Activated B cell treated with CpG ODN at 0.5 μM for 24 hours (primary cell): ENCODE measurements at regions of chr7 and their contacts with region 1.

Region 1: DNA sequence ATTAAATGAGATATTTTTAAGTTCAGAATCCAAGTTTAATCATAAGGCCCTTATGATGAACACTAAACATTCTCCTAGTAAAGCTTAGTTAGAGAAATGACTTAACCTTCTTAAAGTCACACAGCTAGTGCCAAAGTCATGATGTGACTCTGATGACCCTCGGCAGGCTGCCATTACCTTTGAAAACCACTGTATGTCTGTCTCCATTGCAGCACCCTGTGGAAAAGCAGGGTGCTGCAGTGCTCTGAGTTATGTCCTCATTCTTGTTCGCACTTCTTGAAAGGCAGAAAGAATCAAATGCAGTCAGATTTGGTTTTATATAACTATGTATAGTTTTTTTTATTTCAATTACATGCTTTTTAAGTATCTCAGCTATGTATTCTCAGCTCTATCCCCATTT is 105.0 kb downstream of the PHTF2 start:
- DNase-seq: no peak
- ATAC-seq: peak; percentile 37
- H3K4me3 Mint-ChIP-seq: no peak overlapping the region
- H3K27ac Mint-ChIP-seq: peak overlapping the region; percentile 96
- H3K4me1 Mint-ChIP-seq: peaks cover 51% of the 10 kb centered on the region
- H3K27me3 Mint-ChIP-seq: no peaks in the 10 kb centered on the region
- CTCF ChIP-seq: no peak

Region 2: DNA sequence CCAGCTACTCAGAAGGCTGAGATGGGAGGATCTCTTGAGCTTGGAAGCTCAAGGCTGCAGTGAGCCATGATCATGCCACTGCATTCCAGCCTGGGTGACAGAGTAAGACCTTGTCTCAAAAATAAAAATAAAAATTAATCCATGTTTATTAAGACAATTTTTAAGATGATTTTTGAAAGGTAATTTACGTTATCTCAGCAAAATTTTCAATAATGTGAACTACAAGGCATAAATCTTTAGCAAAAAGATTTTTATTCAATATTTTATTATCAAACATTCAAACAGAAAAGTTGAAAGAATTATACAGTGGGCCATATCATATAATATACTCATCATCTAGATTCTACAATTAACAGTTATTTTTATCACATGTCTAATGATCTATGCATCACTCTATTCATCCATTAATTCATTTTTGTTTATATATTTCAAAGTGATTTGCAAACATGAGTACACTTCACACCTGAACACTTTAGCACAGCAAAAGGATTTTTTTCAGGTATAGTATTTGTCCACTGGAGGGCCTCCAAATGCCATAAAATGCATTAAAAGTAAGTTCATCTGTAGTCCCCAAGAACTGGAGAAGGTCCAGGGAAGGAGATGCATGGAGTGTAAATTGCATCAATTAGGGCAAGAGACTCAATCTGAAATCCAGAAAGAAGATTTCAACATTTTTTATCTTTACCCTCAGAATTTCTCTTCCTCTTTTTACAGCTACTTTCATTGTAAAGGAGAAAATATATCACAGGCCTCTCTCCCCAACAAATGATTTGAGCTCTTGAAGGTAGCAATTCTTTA is 246.0 kb before region 1 on chr7:
- CTCF ChIA-PET with region 1: interaction called, 3 read pairs
- POLR2A ChIA-PET with region 1: no interaction called
- intact Hi-C with region 1: loop called (anchors 10 kb)
- DNase-seq: no peak
- ATAC-seq: peak; percentile 45
- H3K4me3 Mint-ChIP-seq: no peak overlapping the region
- H3K27ac Mint-ChIP-seq: no peak overlapping the region
- H3K4me1 Mint-ChIP-seq: no peaks in the 10 kb centered on the region
- H3K27me3 Mint-ChIP-seq: no peaks in the 10 kb centered on the region
- CTCF ChIP-seq: no peak

Region 3: DNA sequence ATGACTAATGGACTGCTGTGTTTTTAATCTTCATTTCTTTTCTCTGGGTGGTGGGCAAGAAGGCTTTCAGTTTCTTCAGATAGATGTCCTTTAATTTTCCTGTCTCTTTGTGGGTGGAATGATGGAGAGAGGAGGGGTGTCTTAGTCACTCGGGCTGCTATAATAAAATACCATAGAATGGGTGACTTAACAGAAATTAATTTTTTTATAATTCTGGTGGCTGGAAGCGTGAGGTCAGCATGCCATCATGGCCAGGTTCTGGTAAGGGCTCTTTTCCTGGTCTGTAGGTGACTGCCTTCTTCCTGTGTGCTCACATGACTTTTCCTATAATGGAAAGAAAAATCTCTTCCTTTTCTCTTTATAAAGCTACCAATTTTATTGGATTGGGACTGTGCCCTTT is 201.1 kb before region 1 on chr7:
- CTCF ChIA-PET with region 1: no interaction called
- POLR2A ChIA-PET with region 1: interaction called, 17 read pairs
- intact Hi-C with region 1: no loop called
- DNase-seq: no peak
- ATAC-seq: no peak
- H3K4me3 Mint-ChIP-seq: no peak overlapping the region
- H3K27ac Mint-ChIP-seq: peak overlapping the region; percentile 2
- H3K4me1 Mint-ChIP-seq: peaks cover 58% of the 10 kb centered on the region
- H3K27me3 Mint-ChIP-seq: no peaks in the 10 kb centered on the region
- CTCF ChIP-seq: no peak

Region 4: DNA sequence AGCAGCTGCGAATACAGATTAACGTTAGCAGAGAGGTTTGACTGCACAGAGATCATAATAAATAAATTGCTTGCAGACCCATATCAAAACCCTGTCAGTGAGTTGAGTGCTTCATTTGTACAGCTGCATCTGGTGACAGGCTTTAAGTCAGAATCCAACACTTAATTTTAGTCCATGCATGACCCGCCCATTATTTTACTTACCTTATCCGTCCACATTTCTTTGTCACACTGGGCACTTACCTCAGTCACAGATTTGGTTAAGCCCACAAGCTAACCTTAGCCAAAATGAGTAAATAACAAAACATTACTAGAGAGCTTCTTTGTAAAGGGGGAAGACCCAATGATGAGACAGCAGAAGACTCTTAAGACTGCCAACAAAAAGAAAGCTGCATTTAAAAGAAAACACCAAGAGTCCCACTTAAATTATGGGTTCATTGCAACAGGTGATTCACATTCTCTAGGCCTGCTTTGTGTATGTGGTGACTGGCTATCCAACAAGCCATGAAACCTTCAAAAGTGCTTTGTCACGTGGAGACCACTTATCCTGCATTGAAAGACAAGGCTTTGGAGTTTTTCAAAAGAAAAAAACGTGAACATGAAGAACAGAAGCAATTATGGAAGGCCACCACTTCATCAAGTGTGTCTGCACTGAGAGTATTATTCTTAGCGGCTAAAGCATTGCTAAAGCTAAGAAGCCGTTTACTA is 72.8 kb before region 1 on chr7:
- CTCF ChIA-PET with region 1: no interaction called
- POLR2A ChIA-PET with region 1: interaction called, 5 read pairs
- intact Hi-C with region 1: loop called (anchors 2 kb)
- DNase-seq: no peak
- ATAC-seq: no peak
- H3K4me3 Mint-ChIP-seq: no peak overlapping the region
- H3K27ac Mint-ChIP-seq: peak overlapping the region; percentile 55
- H3K4me1 Mint-ChIP-seq: peaks cover 85% of the 10 kb centered on the region
- H3K27me3 Mint-ChIP-seq: no peaks in the 10 kb centered on the region
- CTCF ChIP-seq: no peak

Region 5: GRCh38 chr7:77866786-77867536 is 36.6 kb before region 1 on chr7:
- CTCF ChIA-PET with region 1: no interaction called
- POLR2A ChIA-PET with region 1: interaction called, 17 read pairs
- intact Hi-C with region 1: no loop called
- DNase-seq: no peak
- ATAC-seq: no peak
- H3K4me3 Mint-ChIP-seq: no peak overlapping the region
- H3K27ac Mint-ChIP-seq: no peak overlapping the region
- H3K4me1 Mint-ChIP-seq: peaks cover 54% of the 10 kb centered on the region
- H3K27me3 Mint-ChIP-seq: no peaks in the 10 kb centered on the region
- CTCF ChIP-seq: no peak

Region 6: GRCh38 chr7:77971726-77972125 is 68.1 kb after region 1 on chr7:
- CTCF ChIA-PET with region 1: no interaction called
- POLR2A ChIA-PET with region 1: no interaction called
- intact Hi-C with region 1: no loop called
- DNase-seq: no peak
- ATAC-seq: no peak
- H3K4me3 Mint-ChIP-seq: no peak overlapping the region
- H3K27ac Mint-ChIP-seq: no peak overlapping the region
- H3K4me1 Mint-ChIP-seq: peaks cover 5% of the 10 kb centered on the region
- H3K27me3 Mint-ChIP-seq: no peaks in the 10 kb centered on the region
- CTCF ChIP-seq: no peak